Activated T-helper 2 cell treated with anti-CD3 and anti-CD28 coated beads, Interferon-gamma antibody, Interleukin-2, Interleukin-4, amounts not matched to agents 10 μg/mL and 5 μg/mL and 100 μg/mL, durations not matched to agents 14 hours and 24 hours and 36 hours (primary cell): ENCODE measurements at regions of chr5 and their contacts with region 1.

Region 1: GRCh38 chr5:35838370-35839042 is 18.2 kb upstream of the IL7R start:
- DNase-seq: no peak
- H3K4me3 Mint-ChIP-seq: no peak overlapping the region
- H3K27ac Mint-ChIP-seq: peak overlapping the region; percentile 85
- H3K4me1 Mint-ChIP-seq: peaks cover 51% of the 10 kb centered on the region
- H3K27me3 Mint-ChIP-seq: no peaks in the 10 kb centered on the region

Region 2: DNA sequence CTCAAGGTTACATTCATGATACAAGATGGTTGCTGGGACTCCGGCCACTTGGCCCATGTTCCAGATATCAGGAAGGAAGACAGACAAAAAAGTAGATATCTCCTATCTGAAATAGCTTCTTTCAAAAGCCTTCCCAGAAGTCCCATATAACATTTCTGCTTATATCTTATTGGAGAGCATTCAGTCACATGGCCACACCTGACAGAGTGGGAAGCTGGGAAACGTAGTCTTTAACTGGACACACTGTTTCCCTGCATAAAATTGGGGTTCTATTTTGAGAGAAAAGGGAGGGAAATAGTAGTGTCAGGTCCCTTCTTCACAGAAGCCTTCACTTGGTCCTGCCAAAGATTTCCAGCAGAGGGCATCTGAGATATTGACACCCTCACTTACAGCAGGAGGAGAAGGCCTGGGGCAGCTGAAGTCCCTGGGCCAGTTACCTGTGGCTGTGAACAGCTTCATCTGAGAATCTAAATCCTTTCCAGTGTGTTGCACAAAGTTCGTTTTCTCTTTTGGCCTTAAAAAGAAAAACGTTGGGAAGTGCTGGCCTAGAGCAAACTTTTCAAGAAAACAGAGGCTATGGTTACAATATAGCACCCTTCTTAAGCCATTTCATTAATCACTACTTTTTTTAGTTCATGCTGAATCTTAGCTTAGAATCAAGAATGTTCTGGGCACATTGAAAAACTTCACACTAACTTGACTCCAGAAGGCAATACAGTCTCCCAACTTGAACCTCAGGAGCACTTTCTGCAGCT is 187.3 kb before region 1 on chr5:
- intact Hi-C with region 1: loop called (anchors 5 kb)
- DNase-seq: peak; percentile 46
- H3K4me3 Mint-ChIP-seq: no peak overlapping the region
- H3K27ac Mint-ChIP-seq: no peak overlapping the region
- H3K4me1 Mint-ChIP-seq: peaks cover 11% of the 10 kb centered on the region
- H3K27me3 Mint-ChIP-seq: no peaks in the 10 kb centered on the region

Region 3: GRCh38 chr5:35672995-35673394 is 165.5 kb before region 1 on chr5:
- intact Hi-C with region 1: loop called (anchors 5 kb)
- DNase-seq: peak; percentile 16
- H3K4me3 Mint-ChIP-seq: no peak overlapping the region
- H3K27ac Mint-ChIP-seq: peak overlapping the region; percentile 42
- H3K4me1 Mint-ChIP-seq: peaks cover 46% of the 10 kb centered on the region
- H3K27me3 Mint-ChIP-seq: no peaks in the 10 kb centered on the region

Region 4: DNA sequence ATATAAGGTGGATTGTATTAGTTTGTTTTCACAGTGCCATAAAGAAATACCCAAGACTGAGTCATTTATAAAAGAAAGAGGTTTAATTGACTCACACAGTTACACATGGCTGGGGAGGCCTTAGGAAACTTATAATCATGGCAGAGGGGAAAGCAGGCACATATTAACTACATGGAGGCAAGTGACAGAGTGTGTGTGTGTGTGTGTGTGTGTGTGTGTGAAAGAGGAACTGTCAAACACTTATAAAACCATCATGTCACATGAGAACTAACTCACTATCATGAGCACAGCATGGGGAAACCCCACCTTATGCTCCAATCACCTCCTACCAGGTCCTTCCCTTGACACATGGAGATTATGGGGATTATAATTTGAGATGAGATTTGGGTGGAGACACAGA is 102.2 kb before region 1 on chr5:
- intact Hi-C with region 1: loop called (anchors 5 kb)
- DNase-seq: no peak
- H3K4me3 Mint-ChIP-seq: no peak overlapping the region
- H3K27ac Mint-ChIP-seq: peak overlapping the region; percentile 69
- H3K4me1 Mint-ChIP-seq: peaks cover 22% of the 10 kb centered on the region
- H3K27me3 Mint-ChIP-seq: no peaks in the 10 kb centered on the region

Region 5: GRCh38 chr5:35826554-35826953 is 12.0 kb before region 1 on chr5:
- intact Hi-C with region 1: loop called (anchors 1 kb)
- DNase-seq: no peak
- H3K4me3 Mint-ChIP-seq: peak overlapping the region; percentile 45
- H3K27ac Mint-ChIP-seq: peak overlapping the region; percentile 94
- H3K4me1 Mint-ChIP-seq: peaks cover 81% of the 10 kb centered on the region
- H3K27me3 Mint-ChIP-seq: no peaks in the 10 kb centered on the region

Region 6: GRCh38 chr5:35908228-35908627 is 69.7 kb after region 1 on chr5:
- intact Hi-C with region 1: loop called (anchors 1 kb)
- DNase-seq: no peak
- H3K4me3 Mint-ChIP-seq: no peak overlapping the region
- H3K27ac Mint-ChIP-seq: peak overlapping the region; percentile 89
- H3K4me1 Mint-ChIP-seq: peaks cover 61% of the 10 kb centered on the region
- H3K27me3 Mint-ChIP-seq: no peaks in the 10 kb centered on the region